ENCODE measurements at regions of chr2 and their contacts with region 1.

Region 1: GRCh38 chr2:100984892-100985379 is 17.2 kb upstream of the RPL31 start:
- DNase-seq: peak; percentile 53 to 94
- H3K4me3 ChIP-seq: no peak overlapping the region
- CTCF ChIP-seq: peak in 1 of 3 donors; percentile 71
- POLR2A ChIP-seq: no peak

Region 2: GRCh38 chr2:100610381-100610831 is 374.5 kb before region 1 on chr2:
- intact Hi-C with region 1: loop called (anchors 2 kb)
- DNase-seq: peak; percentile 29 to 88
- H3K4me3 ChIP-seq: no peak overlapping the region
- CTCF ChIP-seq: no peak
- POLR2A ChIP-seq: no peak

Region 3: DNA sequence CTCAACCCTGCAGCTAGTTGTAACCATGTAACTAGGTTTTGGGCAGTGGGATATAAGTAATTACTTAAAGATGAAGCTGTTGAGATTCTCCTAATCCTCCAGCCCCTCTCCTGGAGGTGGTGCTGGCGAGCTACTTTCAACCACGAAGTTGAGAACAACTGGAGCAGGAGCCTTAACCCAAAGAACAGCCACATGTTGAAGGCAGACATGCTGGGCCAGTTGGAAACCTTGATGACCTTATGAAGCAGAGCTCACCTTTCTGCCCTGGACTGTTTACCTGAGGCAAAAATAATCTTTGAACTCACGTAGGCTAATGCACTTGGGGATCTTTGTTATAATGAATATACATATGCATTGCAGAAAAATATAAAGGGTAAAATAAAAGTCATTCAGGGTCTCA is 254.6 kb before region 1 on chr2:
- intact Hi-C with region 1: loop called (anchors 10 kb)
- DNase-seq: peak in 1 of 2 donors; percentile 42
- H3K4me3 ChIP-seq: no peak overlapping the region
- CTCF ChIP-seq: no peak
- POLR2A ChIP-seq: no peak

Measured in lower leg skin (tissue), 4 donors.